OCI-LY7 (cell line): ENCODE measurements at regions of chr4 and their contacts with region 1.

Region 1: GRCh38 chr4:185256446-185256845 is 47.0 kb downstream of the SNX25 start:
- DNase-seq: no peak
- H3K4me3 ChIP-seq: peak overlapping the region; percentile 53
- H3K27ac ChIP-seq: peak overlapping the region; percentile 25
- H3K4me1 ChIP-seq: peaks cover 69% of the 10 kb centered on the region
- CTCF ChIP-seq: no peak

Region 2: DNA sequence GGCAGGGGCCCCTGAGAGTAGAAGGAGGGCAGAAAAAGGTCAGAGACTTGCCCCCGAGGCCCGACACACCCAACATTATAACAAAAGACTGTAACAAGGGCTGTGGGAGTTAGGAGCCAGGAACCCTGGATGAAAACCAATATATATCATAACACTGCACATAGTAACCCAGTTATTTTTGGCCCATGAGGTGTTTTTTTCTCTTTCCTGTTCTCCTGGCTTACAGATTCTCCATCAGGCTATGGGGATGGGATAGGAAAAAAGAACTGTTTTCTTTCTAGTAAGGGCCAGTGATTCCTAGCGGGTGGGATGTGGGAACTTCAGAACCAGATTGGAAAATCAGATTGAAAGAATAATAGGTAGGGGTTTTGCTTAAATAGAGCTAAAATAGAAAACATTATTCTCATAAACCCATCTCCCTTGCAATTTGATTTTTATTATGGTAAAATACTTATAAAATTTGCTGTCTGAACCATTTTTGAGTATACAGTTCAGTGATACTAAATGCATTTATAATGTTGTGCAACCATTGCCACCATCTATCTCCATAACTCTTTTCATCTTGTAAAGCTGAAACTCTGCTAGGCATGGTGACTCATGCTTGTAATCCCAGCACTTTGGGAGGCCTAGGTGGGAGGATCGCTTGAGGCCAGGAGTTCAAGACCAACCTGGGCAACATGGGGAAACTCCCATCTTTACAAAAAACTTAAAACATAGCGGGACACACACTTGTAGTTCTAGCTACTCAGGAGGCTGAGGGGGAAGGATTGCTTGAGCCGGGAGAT is 13.5 kb before region 1 on chr4:
- CTCF ChIA-PET with region 1: no interaction called
- POLR2A ChIA-PET with region 1: interaction called, 26 read pairs
- intact Hi-C with region 1: no loop called
- DNase-seq: no peak
- H3K4me3 ChIP-seq: no peak overlapping the region
- H3K27ac ChIP-seq: no peak overlapping the region
- H3K4me1 ChIP-seq: peaks cover 5% of the 10 kb centered on the region
- CTCF ChIP-seq: no peak

Region 3: DNA sequence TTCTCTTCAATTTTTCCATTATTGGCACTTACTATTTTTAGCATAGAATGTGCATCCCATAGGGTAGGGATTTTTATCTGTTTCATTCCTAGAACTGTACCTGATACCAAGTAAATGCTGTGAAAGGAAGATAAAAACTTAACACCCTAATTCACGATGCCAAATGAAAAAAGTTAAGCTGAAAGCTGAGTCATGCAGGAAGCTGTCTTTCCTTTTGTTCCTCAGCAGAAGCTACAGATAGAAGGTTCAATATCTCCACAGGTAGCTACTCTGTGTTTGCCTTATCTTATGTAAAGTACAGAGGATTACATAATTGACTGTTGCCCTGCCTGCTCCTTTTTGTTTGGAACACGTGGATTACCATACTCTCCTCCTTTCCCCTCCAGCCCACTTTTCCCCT is 62.2 kb after region 1 on chr4:
- CTCF ChIA-PET with region 1: no interaction called
- POLR2A ChIA-PET with region 1: no interaction called
- intact Hi-C with region 1: no loop called
- DNase-seq: no peak
- H3K4me3 ChIP-seq: no peak overlapping the region
- H3K27ac ChIP-seq: no peak overlapping the region
- H3K4me1 ChIP-seq: peaks cover 5% of the 10 kb centered on the region
- CTCF ChIP-seq: no peak